ENCODE measurements at regions of chr1 and their contacts with region 1.

Region 1: DNA sequence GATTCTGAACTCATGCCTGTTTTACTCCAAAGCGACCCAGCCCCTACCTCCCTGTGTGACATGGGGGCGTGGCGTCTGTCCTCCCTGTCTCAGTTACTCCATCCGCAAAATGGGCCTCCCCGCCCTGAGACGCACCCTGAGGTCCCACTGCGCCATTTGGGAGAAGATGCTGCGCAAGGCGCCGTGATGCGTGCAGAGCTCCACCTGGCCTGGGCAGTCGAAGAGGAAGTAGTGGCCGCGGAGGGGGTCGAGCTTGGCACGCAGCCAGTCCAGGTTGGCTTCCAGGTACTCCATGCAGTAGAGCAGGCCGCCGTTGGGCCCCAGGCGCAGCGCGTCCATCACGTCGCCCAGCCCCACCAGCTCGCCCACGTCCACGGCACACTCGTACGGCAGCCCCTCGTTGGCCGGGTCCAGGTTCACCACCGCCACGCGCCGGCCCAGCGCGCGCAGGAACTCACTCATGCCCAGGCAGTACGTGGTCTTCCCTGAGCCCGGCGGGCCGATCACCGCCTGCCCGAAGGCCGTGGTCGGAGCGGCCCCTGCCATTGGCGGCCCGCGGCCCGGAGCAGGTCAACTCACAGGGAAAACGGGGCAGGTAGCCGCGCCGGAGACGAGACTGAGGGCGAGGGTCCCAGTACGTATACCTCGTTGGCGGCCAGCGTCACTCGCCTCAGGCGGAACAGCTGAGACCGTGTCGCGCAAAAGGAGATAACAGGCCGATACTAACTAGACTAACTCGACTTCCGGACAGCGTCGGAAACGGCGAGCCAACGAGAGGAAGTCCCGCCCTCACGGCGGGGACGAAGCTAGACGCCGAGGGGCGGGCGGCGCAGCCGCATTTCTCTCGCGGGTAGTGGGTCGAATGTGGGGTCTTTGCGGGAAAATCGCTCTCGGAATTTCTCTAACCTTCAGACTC is at the start of gene GPN2:
- DNase-seq: peak; percentile 72 to 84 (median 75)
- H3K4me3 ChIP-seq: peak within 1 kb of the TSS; percentile 81 to 98
- H3K4me3 Mint-ChIP-seq: peak within 1 kb of the TSS; percentile 91 to 97 (median 96)
- H3K27ac ChIP-seq: peak within 1 kb of the TSS; percentile 93
- H3K27ac Mint-ChIP-seq: peak within 1 kb of the TSS; percentile 97 to 98 (median 97)
- H3K4me1 ChIP-seq: peaks cover 34% of the 10 kb centered on the region
- H3K4me1 Mint-ChIP-seq: peaks cover 22 to 46% (median 31%) of the 10 kb centered on the region in 4 donors
- H3K27me3 ChIP-seq: no peaks in the 10 kb centered on the region
- H3K27me3 Mint-ChIP-seq: no peaks in the 10 kb centered on the region
- total RNA-seq, gene GPN2: 37.0 to 38.0 TPM

Region 2: GRCh38 chr1:26570287-26570686 is 319.5 kb before region 1 on chr1:
- CTCF ChIA-PET with region 1: no interaction called
- POLR2A ChIA-PET with region 1: no interaction called
- intact Hi-C with region 1: no loop called
- DNase-seq: no peak
- H3K4me3 ChIP-seq: no peak overlapping the region
- H3K4me3 Mint-ChIP-seq: no peak overlapping the region
- H3K27ac ChIP-seq: no peak overlapping the region
- H3K27ac Mint-ChIP-seq: peak overlapping the region in 5 of 7 donors; percentile 41 to 77 (median 52)
- H3K4me1 ChIP-seq: no peaks in the 10 kb centered on the region
- H3K4me1 Mint-ChIP-seq: peaks cover 3 to 10% (median 5%) of the 10 kb centered on the region in 4 donors
- H3K27me3 ChIP-seq: no peaks in the 10 kb centered on the region
- H3K27me3 Mint-ChIP-seq: no peaks in the 10 kb centered on the region

Region 3: GRCh38 chr1:26833432-26834405 is 56.1 kb before region 1 on chr1:
- CTCF ChIA-PET with region 1: interaction called, 11 read pairs
- POLR2A ChIA-PET with region 1: interaction called, 12 read pairs
- intact Hi-C with region 1: no loop called
- DNase-seq: peak; percentile 89 to 98 (median 94)
- H3K4me3 ChIP-seq: peak overlapping the region in 1 of 2 donors; percentile 23
- H3K4me3 Mint-ChIP-seq: peak overlapping the region; percentile 74 to 92 (median 85)
- H3K27ac ChIP-seq: peak overlapping the region; percentile 97
- H3K27ac Mint-ChIP-seq: peak overlapping the region; percentile 98 to 100 (median 100)
- H3K4me1 ChIP-seq: peaks cover 74% of the 10 kb centered on the region
- H3K4me1 Mint-ChIP-seq: peaks cover 60 to 87% (median 73%) of the 10 kb centered on the region in 4 donors
- H3K27me3 ChIP-seq: no peaks in the 10 kb centered on the region
- H3K27me3 Mint-ChIP-seq: no peaks in the 10 kb centered on the region

Region 4: GRCh38 chr1:26877326-26877725 is 12.5 kb before region 1 on chr1:
- CTCF ChIA-PET with region 1: interaction called, 15 read pairs
- POLR2A ChIA-PET with region 1: interaction called, 5 read pairs
- intact Hi-C with region 1: no loop called
- DNase-seq: no peak
- H3K4me3 ChIP-seq: no peak overlapping the region
- H3K4me3 Mint-ChIP-seq: no peak overlapping the region
- H3K27ac ChIP-seq: no peak overlapping the region
- H3K27ac Mint-ChIP-seq: no peak overlapping the region
- H3K4me1 ChIP-seq: no peaks in the 10 kb centered on the region
- H3K4me1 Mint-ChIP-seq: peaks cover 0 to 1% (median under 1%) of the 10 kb centered on the region in 4 donors
- H3K27me3 ChIP-seq: no peaks in the 10 kb centered on the region
- H3K27me3 Mint-ChIP-seq: no peaks in the 10 kb centered on the region

Region 5: DNA sequence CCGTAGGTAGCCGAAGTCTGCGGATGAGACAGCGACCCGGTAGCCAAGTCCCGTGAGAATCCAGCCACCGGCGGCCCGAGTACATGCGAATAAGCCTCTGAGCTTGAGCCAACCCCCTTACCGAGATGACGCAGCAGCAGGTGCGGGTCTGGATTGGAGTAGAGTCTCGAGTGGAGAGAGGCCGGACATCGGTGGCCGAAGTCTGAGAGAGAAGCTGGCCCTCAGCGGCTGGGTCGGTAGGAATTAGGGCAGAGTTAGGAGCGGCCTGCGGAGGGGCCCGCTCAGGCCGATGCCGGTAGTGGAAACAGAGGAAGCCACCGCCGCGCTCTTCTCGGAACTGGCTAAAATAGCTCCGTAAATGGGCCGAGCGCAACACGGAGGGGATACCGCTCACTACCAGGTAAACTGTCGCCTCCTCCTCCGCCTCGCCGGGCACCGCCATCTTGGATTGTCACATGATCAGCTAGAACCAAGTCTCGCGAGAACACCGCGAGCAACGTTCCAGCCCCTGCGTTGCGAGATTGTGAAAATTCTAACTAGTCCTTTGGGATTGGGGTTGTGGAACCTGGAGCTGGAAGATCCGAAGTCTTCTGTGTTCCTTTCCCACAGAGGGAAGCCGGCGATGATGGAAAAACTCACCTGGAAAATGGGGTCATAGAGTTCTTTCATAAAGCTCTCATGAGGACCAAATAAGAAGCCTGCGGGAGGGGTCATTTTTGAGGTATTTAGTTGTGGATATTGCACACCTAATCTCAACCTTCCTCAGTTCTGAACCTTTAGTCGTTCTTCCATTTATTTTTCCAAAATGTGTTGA is 10.4 kb after region 1 on chr1 and contains the start of gene GPATCH3:
- CTCF ChIA-PET with region 1: interaction called, 14 read pairs
- POLR2A ChIA-PET with region 1: interaction called, 114 read pairs
- intact Hi-C with region 1: loop called (anchors 1 kb)
- DNase-seq: peak; percentile 87 to 89 (median 88)
- H3K4me3 ChIP-seq: peak within 1 kb of the TSS; percentile 86 to 93
- H3K4me3 Mint-ChIP-seq: peak within 1 kb of the TSS; percentile 87 to 100 (median 96)
- H3K27ac ChIP-seq: peak within 1 kb of the TSS; percentile 90
- H3K27ac Mint-ChIP-seq: peak within 1 kb of the TSS; percentile 92 to 100 (median 98)
- H3K4me1 ChIP-seq: peaks cover 25% of the 10 kb centered on the region
- H3K4me1 Mint-ChIP-seq: peaks cover 21 to 48% (median 26%) of the 10 kb centered on the region in 4 donors
- H3K27me3 ChIP-seq: no peaks in the 10 kb centered on the region
- H3K27me3 Mint-ChIP-seq: no peaks in the 10 kb centered on the region
- total RNA-seq, gene GPATCH3: 25.0 to 26.7 TPM

Region 6: GRCh38 chr1:26921540-26922430 is 32.0 kb after region 1 on chr1 and contains the start of gene NUDC:
- CTCF ChIA-PET with region 1: interaction called, 4 read pairs
- POLR2A ChIA-PET with region 1: interaction called, 13 read pairs
- intact Hi-C with region 1: no loop called
- DNase-seq: peak; percentile 94 to 97 (median 96)
- H3K4me3 ChIP-seq: peak within 1 kb of the TSS; percentile 19 to 78
- H3K4me3 Mint-ChIP-seq: peak within 1 kb of the TSS; percentile 87 to 99 (median 96)
- H3K27ac ChIP-seq: peak within 1 kb of the TSS; percentile 82
- H3K27ac Mint-ChIP-seq: peak within 1 kb of the TSS; percentile 91 to 99 (median 98)
- H3K4me1 ChIP-seq: peaks cover 24% of the 10 kb centered on the region
- H3K4me1 Mint-ChIP-seq: peaks cover 23 to 46% (median 31%) of the 10 kb centered on the region in 4 donors
- H3K27me3 ChIP-seq: no peaks in the 10 kb centered on the region
- H3K27me3 Mint-ChIP-seq: no peaks in the 10 kb centered on the region
- total RNA-seq, gene NUDC: 42.0 to 43.0 TPM

Region 7: DNA sequence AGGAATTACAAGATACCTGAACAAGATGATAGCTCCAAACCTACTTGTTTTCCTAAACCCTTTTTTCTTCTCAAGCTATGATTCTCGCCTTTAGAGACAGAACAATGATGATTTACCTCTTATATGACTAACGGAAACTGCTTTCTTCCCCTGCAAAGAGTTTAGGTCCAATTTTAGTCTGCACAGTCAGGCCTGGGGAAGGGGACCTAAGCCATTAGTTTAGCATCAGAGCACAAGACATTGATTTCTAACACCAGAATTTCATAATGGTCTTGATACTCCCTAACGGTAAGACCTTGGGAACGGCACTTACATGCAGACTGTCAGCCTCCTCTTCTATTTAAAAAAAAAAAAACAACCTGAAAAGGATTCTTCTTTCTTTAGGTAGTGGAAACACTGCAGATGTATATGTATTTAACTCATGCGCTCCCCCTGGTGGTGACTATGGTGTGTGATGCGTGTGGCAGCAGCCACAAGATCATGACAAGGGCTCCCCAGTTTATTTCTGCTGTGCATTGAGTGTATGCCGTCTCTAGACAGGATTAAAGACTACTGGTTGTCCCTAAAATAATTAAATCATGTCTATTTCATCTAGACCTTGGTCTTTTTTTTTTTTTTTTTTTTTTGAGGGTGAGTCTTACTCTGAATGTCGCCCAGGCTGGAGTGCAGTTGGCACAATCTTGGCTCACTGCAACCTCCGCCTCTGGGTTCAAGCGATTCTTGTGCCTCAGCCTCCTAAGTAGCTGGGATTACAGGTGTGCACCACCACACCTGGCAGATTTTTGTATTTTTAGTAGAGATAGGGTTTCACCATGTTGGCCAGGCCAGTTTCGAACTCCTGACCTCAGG is 394.8 kb after region 1 on chr1:
- CTCF ChIA-PET with region 1: no interaction called
- POLR2A ChIA-PET with region 1: no interaction called
- intact Hi-C with region 1: no loop called
- DNase-seq: peak; percentile 77 to 85 (median 81)
- H3K4me3 ChIP-seq: no peak overlapping the region
- H3K4me3 Mint-ChIP-seq: no peak overlapping the region
- H3K27ac ChIP-seq: no peak overlapping the region
- H3K27ac Mint-ChIP-seq: peak overlapping the region in 4 of 7 donors; percentile 42 to 73 (median 62)
- H3K4me1 ChIP-seq: no peaks in the 10 kb centered on the region
- H3K4me1 Mint-ChIP-seq: peaks cover 0 to 6% (median under 1%) of the 10 kb centered on the region in 4 donors
- H3K27me3 ChIP-seq: no peaks in the 10 kb centered on the region
- H3K27me3 Mint-ChIP-seq: no peaks in the 10 kb centered on the region

Measured in CD4-positive, alpha-beta memory T cell (primary cell).